A549 (cell line): ENCODE measurements at regions of chr2 and their contacts with region 1.

Region 1: GRCh38 chr2:173402405-173402974 is 47.8 kb downstream of the CDCA7 start:
- DNase-seq: peak; percentile 81 to 86
- ATAC-seq: peak; percentile 95 to 98
- H3K4me3 ChIP-seq: peak overlapping the region; percentile 43
- H3K27ac ChIP-seq: peak overlapping the region; percentile 70 to 80
- H3K4me1 ChIP-seq: peaks cover 17% of the 10 kb centered on the region; the same call in 2 of the 3 replicates
- CTCF ChIP-seq: peak; percentile 94
- EP300 ChIP-seq: no peak
- POLR2A ChIP-seq: no peak
- RAD21 ChIP-seq: peak; percentile 99

Region 2: DNA sequence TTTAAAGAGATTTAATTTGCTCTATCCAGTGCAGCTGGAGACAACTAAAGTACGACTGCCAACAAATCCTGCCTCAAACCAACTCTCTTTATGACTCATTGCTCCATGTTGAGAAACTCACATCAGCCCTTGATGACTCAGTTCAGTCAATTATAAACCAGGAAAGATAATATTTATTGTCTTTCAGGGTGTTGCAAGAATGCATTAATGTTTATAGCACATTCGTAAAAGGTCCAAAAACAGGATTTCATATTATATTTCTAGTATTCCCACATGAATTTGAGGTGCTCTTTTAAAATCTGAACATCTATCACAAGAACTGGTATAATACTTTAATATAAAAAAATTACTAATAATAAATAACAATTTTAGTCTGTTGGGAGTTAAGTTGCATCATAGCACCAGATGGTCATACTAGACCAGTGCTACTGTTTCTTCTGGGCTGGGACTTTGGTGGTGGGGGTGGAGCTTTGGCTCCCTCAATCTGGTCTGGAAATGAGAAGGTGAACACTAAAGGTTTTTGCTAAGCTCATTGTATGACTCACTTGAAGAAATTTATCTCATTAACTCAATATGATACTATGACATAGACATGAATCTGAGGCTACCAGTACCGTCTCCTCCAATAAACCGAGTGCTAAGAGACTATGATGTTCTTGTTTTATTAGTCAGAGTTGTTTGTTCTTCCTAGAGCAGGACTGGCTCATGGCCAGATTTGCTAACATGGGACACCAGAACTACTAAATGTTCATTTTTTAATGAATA is 353.4 kb before region 1 on chr2:
- CTCF ChIA-PET with region 1: no interaction called
- POLR2A ChIA-PET with region 1: no interaction called
- DNase-seq: peak; percentile 71 to 97
- ATAC-seq: peak; percentile 94 to 98
- H3K4me3 ChIP-seq: peak overlapping the region; percentile 26; the same call in 1 of the 3 replicates
- H3K27ac ChIP-seq: peak overlapping the region; percentile 83 to 90
- H3K4me1 ChIP-seq: peaks cover 54% of the 10 kb centered on the region
- CTCF ChIP-seq: no peak
- EP300 ChIP-seq: peak; percentile 80 to 82; a peak in 4 of 5 replicates
- POLR2A ChIP-seq: no peak
- RAD21 ChIP-seq: no peak; a peak in 2 of 5 replicates

Region 3: DNA sequence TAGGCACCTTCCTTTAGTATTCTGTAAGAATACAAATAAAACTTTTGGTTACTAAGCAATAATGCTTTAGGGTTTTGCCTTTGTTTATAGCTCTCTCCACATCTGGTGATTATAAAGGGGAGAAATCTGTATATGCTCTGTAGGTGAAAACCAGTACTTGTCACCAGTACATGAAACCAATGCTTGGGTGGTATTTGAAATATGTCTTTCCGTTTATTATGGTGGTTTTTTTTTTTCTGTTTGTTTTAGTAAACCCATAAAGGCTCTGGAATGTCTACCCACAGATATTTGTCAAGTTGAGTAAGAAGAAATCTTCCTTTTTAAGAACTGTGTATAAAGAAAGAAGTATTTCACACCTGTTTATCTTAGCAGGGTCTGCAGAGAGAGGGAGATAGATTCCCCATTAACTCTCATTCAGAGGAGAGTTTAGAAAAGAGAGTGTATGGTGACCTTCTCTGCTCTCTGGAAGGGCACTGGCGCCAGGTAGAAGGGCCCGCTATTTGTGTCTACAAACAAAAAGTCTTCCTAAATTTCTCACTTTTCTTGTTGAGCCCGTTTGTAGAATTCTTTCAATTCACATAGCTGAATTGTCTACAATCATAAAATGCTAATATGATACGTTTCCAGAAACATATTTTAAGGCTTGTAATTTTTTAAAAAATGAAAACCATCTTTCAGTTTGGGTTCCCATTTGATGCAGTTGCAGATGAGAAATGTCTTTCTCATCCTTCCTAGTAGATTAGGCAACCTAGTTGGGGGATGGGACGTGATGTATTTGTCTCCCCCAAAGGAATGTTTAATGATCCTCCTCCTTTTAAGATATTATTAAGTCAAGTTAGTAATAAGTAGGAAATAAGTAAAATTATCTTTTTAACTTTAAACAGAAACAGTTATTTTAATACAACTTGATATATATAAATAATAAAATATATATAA is 293.0 kb before region 1 on chr2:
- CTCF ChIA-PET with region 1: no interaction called
- POLR2A ChIA-PET with region 1: no interaction called
- DNase-seq: peak in 1 of 2 experiments; percentile 77
- ATAC-seq: peak; percentile 82 to 89
- H3K4me3 ChIP-seq: peak overlapping the region; percentile 30; the same call in 2 of the 3 replicates
- H3K27ac ChIP-seq: peak overlapping the region; percentile 83 to 86
- H3K4me1 ChIP-seq: peaks cover 44% of the 10 kb centered on the region
- CTCF ChIP-seq: no peak
- EP300 ChIP-seq: peak; percentile 40 to 59; a peak in 4 of 5 replicates
- POLR2A ChIP-seq: no peak
- RAD21 ChIP-seq: peak in 1 of 2 experiments; percentile 29; a peak in 1 of 5 replicates

Region 4: GRCh38 chr2:173388795-173389194 is 13.7 kb before region 1 on chr2:
- CTCF ChIA-PET with region 1: interaction called, 13 read pairs
- POLR2A ChIA-PET with region 1: no interaction called
- DNase-seq: no peak
- ATAC-seq: no peak
- H3K4me3 ChIP-seq: no peak overlapping the region
- H3K27ac ChIP-seq: no peak overlapping the region
- H3K4me1 ChIP-seq: 0 out of 3 replicates have a peak, but pooled peaks cover under 1% of the 10 kb centered on the region
- CTCF ChIP-seq: no peak
- EP300 ChIP-seq: no peak
- POLR2A ChIP-seq: no peak
- RAD21 ChIP-seq: no peak

Region 5: DNA sequence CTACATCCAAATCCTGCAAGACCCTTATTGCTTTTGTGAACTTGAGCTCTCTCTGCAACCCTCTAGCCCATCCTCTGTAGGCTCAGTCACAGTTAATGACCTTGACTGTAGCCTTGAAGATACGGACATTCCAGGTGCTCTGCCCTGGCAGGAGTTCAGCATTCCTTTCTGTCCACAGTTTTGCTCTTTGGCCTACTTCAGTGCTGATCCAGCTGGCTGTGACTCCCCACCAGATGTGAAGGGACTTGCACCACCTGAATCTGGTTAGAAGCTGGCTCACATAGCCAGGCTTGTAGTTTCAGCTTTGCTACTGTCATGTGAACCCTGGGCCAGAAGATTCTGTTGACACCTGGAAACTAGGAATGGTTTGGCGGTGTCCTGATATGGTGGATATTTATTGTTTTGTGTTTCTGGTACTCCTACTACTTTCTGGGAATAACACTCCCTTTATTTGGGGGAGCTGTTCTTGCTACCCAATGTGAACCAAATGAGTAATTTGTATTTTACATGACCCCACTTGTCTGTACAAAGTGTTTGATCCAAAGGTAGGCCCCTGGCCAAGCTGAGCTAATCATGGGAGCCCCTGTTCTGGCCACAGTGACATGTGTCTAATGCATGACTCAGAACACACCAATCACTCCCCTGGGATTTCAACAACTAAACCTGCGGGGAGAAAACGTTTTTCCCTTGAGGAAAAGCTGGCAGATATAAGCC is 25.6 kb after region 1 on chr2:
- CTCF ChIA-PET with region 1: interaction called, 42 read pairs
- POLR2A ChIA-PET with region 1: no interaction called
- DNase-seq: no peak
- ATAC-seq: no peak
- H3K4me3 ChIP-seq: no peak overlapping the region
- H3K27ac ChIP-seq: no peak overlapping the region
- H3K4me1 ChIP-seq: peaks cover 19% of the 10 kb centered on the region
- CTCF ChIP-seq: no peak
- EP300 ChIP-seq: no peak
- POLR2A ChIP-seq: no peak
- RAD21 ChIP-seq: no peak

Region 6: GRCh38 chr2:173568054-173568453 is 165.6 kb after region 1 on chr2:
- CTCF ChIA-PET with region 1: interaction called, 17 read pairs
- POLR2A ChIA-PET with region 1: no interaction called
- DNase-seq: peak in 1 of 2 experiments; percentile 65
- ATAC-seq: peak; percentile 70 to 85; a peak in 4 of 6 replicates
- H3K4me3 ChIP-seq: no peak overlapping the region
- H3K27ac ChIP-seq: 0 out of 6 replicates have a peak overlapping the region, but pooled peaks of 1 of the 2 experiments have one; percentile 14
- H3K4me1 ChIP-seq: peaks cover 21% of the 10 kb centered on the region
- CTCF ChIP-seq: peak; percentile 53
- EP300 ChIP-seq: no peak
- POLR2A ChIP-seq: no peak
- RAD21 ChIP-seq: peak; percentile 64 to 80

Region 7: DNA sequence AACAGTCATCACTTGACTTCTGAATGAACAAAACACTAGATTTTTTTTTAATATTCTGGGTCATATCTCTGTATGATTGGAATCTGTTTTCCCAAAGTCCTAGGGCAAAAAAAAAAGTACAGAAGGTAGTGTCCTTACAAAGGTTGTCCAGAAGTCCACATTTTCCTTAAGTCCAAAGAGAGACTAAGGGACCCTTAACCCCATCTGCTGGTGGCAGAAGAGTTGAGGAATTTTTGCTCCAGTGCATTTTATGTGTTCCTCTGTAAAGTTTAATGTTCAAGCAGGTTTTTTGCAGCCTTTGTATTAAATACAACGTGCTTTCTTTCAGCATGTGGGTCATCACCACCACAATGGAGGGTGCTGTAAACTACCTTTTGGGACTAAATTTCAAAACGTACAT is 346.8 kb after region 1 on chr2:
- CTCF ChIA-PET with region 1: interaction called, 10 read pairs
- POLR2A ChIA-PET with region 1: no interaction called
- DNase-seq: peak; percentile 6 to 53
- ATAC-seq: peak; percentile 65 to 68; a peak in 3 of 6 replicates
- H3K4me3 ChIP-seq: no peak overlapping the region
- H3K27ac ChIP-seq: no peak overlapping the region
- H3K4me1 ChIP-seq: peaks cover 7% of the 10 kb centered on the region; the same call in 1 of the 3 replicates
- CTCF ChIP-seq: peak; percentile 61
- EP300 ChIP-seq: no peak
- POLR2A ChIP-seq: no peak
- RAD21 ChIP-seq: peak; percentile 73 to 77

Region 8: GRCh38 chr2:174350018-174350417 is 947.5 kb after region 1 on chr2:
- CTCF ChIA-PET with region 1: interaction called, 12 read pairs
- POLR2A ChIA-PET with region 1: no interaction called
- DNase-seq: peak in 1 of 2 experiments; percentile 35
- ATAC-seq: peak in 1 of 2 experiments; percentile 55; a peak in 1 of 6 replicates
- H3K4me3 ChIP-seq: no peak overlapping the region
- H3K27ac ChIP-seq: no peak overlapping the region
- H3K4me1 ChIP-seq: no peaks in the 10 kb centered on the region
- CTCF ChIP-seq: peak; percentile 48
- EP300 ChIP-seq: no peak
- POLR2A ChIP-seq: no peak
- RAD21 ChIP-seq: peak; percentile 20 to 47; a peak in 3 of 5 replicates